HCT116 (cell line): ENCODE measurements at regions of chr19 and their contacts with region 1.

Region 1: DNA sequence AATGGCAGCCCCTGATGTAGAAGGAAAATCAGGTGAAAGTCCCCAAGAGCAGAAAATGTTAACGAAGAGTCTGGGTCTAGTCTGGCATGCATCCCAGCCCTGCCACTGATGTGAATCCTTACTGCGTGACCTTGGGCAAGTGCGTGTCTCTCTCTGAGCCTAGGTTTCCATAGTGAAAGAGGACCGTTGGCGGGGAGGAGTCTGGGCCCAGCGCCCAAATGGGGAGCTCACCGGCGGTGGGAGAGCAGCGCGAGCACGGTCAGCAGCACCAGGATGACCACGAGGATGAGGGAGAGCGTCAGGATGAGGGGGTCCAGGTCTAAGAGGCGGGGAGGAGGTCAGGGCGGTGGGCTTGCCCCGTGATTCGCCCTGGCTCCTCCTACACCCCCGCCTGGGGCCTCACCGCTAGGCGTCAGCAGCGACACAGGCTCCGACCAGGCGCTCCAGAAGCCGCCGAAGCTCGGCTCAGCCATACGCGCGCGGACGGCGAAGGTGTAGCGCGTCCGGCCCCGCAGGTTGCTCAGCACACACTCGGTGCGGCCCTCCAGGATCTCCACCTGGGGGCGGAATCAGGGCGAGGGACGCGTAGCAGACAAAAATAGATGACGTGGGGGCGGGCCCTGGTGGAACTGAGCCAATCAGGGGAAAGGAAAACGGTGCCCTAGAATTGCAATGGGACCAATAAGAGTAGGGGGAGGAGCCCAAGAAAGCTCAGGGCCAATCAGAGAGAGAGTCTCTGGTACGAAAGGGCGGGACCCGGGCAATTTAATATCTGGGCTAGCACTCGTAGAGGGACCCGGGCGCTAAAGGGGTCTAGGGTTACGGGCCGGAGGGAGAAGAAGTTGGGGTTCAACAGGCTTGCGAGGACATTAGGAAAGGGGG is 3.2 kb downstream of the EPOR start:
- DNase-seq: peak; percentile 97
- ATAC-seq: peak; percentile 70
- H3K4me3 ChIP-seq: peak overlapping the region; percentile 69 to 71
- H3K27ac ChIP-seq: peak overlapping the region; percentile 81
- H3K4me1 ChIP-seq: peaks cover 48 to 80% of the 10 kb centered on the region in 2 experiments
- H3K27me3 ChIP-seq: no peaks in the 10 kb centered on the region
- CTCF ChIP-seq: peak in 2 of 3 experiments; percentile 67 to 70; a peak in 4 of 6 replicates
- POLR2A ChIP-seq: peak; percentile 95
- RAD21 ChIP-seq: no peak

Region 2: DNA sequence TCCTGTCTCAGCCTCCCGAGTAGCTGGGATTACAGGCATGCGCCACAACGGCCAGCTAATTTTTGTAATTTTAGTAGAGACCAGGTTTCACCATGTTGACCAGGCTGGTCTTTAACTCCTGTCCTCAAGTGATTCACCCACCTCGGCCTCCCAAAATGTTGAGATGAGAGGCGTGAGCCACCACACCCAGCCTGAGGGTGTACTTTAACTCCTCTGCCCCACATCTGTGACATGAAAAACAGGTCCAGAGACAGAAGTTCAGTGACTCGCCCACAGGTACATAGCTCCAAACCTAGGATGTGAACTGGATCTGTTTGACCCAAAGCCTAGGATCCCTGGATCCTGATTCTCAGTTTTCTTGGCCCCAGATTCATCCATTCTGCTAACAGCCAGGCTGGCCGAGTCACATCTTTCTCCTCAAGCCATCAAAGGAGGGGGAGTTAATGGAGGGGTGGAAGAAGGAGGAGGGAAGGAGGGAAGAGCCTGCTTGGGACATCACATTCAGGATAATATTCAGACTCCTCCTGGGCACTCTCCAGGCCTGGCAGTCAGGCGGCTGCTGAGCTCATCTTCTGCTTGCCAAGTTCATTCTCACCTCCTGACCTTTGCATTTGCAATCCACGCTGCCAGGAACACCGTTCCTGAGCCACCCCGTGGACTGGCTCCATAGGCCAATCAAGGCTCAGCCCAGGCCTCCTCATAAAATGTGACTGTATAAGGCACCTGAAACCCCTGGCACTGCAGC is 228.4 kb before region 1 on chr19:
- CTCF ChIA-PET with region 1: no interaction called
- POLR2A ChIA-PET with region 1: no interaction called
- RAD21 ChIA-PET with region 1: no interaction called
- intact Hi-C with region 1: no loop called
- DNase-seq: no peak
- ATAC-seq: no peak
- H3K4me3 ChIP-seq: no peak overlapping the region
- H3K27ac ChIP-seq: peak overlapping the region; percentile 34
- H3K4me1 ChIP-seq: peaks cover 41 to 45% of the 10 kb centered on the region in 2 experiments
- H3K27me3 ChIP-seq: no peaks in the 10 kb centered on the region
- CTCF ChIP-seq: no peak
- POLR2A ChIP-seq: no peak
- RAD21 ChIP-seq: no peak

Region 3: DNA sequence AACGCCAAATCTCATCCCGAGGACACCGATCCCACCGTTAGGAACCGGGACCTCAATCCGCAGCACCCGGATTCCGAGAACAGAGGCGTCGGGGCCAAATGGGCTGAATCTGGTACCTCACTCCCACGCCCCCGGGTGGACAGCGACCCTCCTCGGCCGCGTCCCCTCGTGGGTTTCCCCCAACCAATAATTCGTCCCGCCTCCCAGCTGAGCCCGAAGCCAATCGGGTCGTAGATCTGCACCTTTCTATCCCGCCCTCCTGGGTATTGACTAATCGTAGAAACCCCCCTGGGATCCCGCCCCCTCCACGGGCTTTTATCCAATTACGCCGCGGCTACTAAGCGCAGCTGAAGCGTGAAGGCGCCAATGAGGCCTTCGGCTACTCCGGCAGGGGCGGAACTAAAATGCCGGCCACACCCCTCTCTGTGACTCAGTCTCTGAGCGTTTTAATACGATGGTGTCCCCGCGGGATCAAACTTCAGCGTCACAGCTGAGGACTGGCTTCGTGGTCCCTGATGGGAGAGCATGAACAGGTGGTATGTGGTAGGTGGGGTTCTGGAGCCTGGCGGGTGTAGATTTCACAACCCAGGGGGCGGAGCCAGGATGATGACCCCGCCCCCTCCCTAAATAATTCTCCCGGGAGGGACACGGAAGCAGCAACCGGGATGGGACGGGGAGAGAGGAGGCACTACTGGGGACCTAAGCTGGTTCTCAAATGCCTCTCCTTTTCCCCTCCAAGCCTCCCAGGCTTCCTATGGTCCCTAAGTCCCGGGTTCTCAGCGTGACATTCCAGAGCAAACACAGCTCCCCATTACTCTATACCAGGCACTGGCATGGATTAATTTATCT is 34.6 kb before region 1 on chr19 and contains the starts of genes CCDC159 and TMEM205:
- CTCF ChIA-PET with region 1: interaction called, 8 read pairs
- POLR2A ChIA-PET with region 1: interaction called, 15 read pairs
- RAD21 ChIA-PET with region 1: interaction called in 1 of 2 experiments, 6 read pairs
- intact Hi-C with region 1: no loop called
- DNase-seq: peak; percentile 100
- ATAC-seq: peak; percentile 91
- H3K4me3 ChIP-seq: peak within 1 kb of the TSS; percentile 86 to 88
- H3K27ac ChIP-seq: peak within 1 kb of the TSS; percentile 67
- H3K4me1 ChIP-seq: peaks cover 25 to 51% of the 10 kb centered on the region in 2 experiments
- H3K27me3 ChIP-seq: no peaks in the 10 kb centered on the region
- CTCF ChIP-seq: no peak
- POLR2A ChIP-seq: peak; percentile 43
- RAD21 ChIP-seq: no peak
- total RNA-seq, gene CCDC159: 7.7 TPM
- total RNA-seq, gene TMEM205: 55.9 TPM

Region 4: GRCh38 chr19:11390933-11391680 is 10.2 kb after region 1 on chr19:
- CTCF ChIA-PET with region 1: interaction called, 10 read pairs
- POLR2A ChIA-PET with region 1: interaction called, 4 read pairs
- RAD21 ChIA-PET with region 1: no interaction called
- intact Hi-C with region 1: no loop called
- DNase-seq: no peak
- ATAC-seq: peak; percentile 59; the same call in 1 of the 2 replicates
- H3K4me3 ChIP-seq: no peak overlapping the region
- H3K27ac ChIP-seq: no peak overlapping the region
- H3K4me1 ChIP-seq: no peaks in the 10 kb centered on the region
- H3K27me3 ChIP-seq: no peaks in the 10 kb centered on the region
- CTCF ChIP-seq: no peak
- POLR2A ChIP-seq: no peak
- RAD21 ChIP-seq: no peak

Region 5: GRCh38 chr19:11435058-11435832 is 54.4 kb after region 1 on chr19 and contains the starts of genes ODAD3 and PRKCSH:
- CTCF ChIA-PET with region 1: interaction called, 48 read pairs
- POLR2A ChIA-PET with region 1: interaction called, 9 read pairs
- RAD21 ChIA-PET with region 1: interaction called, 3 read pairs
- intact Hi-C with region 1: loop called (anchors 1 kb)
- DNase-seq: peak; percentile 99
- ATAC-seq: peak; percentile 91
- H3K4me3 ChIP-seq: peak within 1 kb of the TSS; percentile 70 to 98
- H3K27ac ChIP-seq: peak within 1 kb of the TSS; percentile 70
- H3K4me1 ChIP-seq: peaks cover 11 to 17% of the 10 kb centered on the region in 2 experiments
- H3K27me3 ChIP-seq: no peaks in the 10 kb centered on the region
- CTCF ChIP-seq: peak; percentile 30 to 82 (median 79); a peak in 4 of 6 replicates
- POLR2A ChIP-seq: peak; percentile 59
- RAD21 ChIP-seq: no peak; the same call in 1 of the 2 replicates
- total RNA-seq, gene ODAD3: 0.52 TPM
- total RNA-seq, gene PRKCSH: 425 TPM

Region 6: GRCh38 chr19:11463391-11463790 is 82.5 kb after region 1 on chr19:
- CTCF ChIA-PET with region 1: no interaction called
- POLR2A ChIA-PET with region 1: no interaction called
- RAD21 ChIA-PET with region 1: no interaction called
- intact Hi-C with region 1: no loop called
- DNase-seq: no peak
- ATAC-seq: no peak
- H3K4me3 ChIP-seq: no peak overlapping the region
- H3K27ac ChIP-seq: no peak overlapping the region
- H3K4me1 ChIP-seq: no peaks in the 10 kb centered on the region; a peak in 1 of 4 replicates
- H3K27me3 ChIP-seq: no peaks in the 10 kb centered on the region
- CTCF ChIP-seq: no peak
- POLR2A ChIP-seq: no peak
- RAD21 ChIP-seq: no peak

Region 7: DNA sequence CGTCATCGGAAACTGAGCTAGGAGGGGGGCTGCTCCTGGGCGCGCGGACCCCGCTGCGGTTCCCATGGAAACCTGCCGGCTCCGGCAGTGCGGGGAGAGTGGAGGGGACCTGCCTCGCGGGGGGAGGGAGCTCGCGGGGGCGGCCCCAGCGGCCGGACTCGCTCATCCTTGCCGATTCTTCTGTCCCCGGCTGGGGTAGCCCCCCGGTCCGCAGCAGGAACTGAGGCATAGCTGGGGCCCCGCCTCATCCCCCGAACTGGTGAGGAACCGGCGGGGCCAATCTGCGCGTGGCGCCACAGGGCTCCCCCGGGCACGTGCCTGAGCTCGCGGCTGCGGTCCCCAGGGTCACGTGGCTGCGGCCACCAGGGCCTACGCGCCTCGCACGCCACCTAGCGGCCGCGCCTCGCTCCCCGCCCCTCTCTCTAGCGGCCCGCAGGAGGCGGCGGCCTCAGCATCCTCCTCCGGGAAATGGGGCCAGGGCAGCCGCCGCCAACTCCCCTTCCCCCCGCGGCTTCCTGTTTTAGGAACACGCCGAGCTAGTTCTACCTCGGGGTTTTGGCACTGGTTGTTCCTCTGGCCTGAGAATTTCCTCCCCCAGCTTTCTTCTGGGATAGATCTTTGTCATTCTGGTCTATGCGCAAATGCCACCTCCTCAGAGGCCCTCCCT is 101.6 kb after region 1 on chr19:
- CTCF ChIA-PET with region 1: interaction called, 10 read pairs
- POLR2A ChIA-PET with region 1: interaction called, 6 read pairs
- RAD21 ChIA-PET with region 1: interaction called in 1 of 2 experiments, 9 read pairs
- intact Hi-C with region 1: no loop called
- DNase-seq: peak; percentile 51
- ATAC-seq: peak; percentile 89
- H3K4me3 ChIP-seq: no peak overlapping the region
- H3K27ac ChIP-seq: no peak overlapping the region
- H3K4me1 ChIP-seq: peaks cover 0 to 3% of the 10 kb centered on the region in 2 experiments; a peak in 1 of 4 replicates
- H3K27me3 ChIP-seq: no peaks in the 10 kb centered on the region
- CTCF ChIP-seq: peak; percentile 82 to 94 (median 85)
- POLR2A ChIP-seq: no peak
- RAD21 ChIP-seq: peak; percentile 91